Dorsolateral prefrontal cortex (tissue), 120 donors: ENCODE measurements at regions of chr2 and their contacts with region 1.

Region 1: GRCh38 chr2:9003616-9004337 is at the start of gene MBOAT2:
- DNase-seq: peak; percentile 77 to 94 (median 84)
- H3K4me3 ChIP-seq: peak within 1 kb of the TSS; percentile 66 to 98 (median 89)
- H3K27ac ChIP-seq: peak within 1 kb of the TSS; percentile 71 to 99 (median 96)
- H3K27me3 ChIP-seq: no peaks in the 10 kb centered on the region
- CTCF ChIP-seq: peak in 3 of 56 donors; percentile 9 to 16 (median 10)
- total RNA-seq, gene MBOAT2: 52.5 to 138 (median 83.9) TPM

Region 2: DNA sequence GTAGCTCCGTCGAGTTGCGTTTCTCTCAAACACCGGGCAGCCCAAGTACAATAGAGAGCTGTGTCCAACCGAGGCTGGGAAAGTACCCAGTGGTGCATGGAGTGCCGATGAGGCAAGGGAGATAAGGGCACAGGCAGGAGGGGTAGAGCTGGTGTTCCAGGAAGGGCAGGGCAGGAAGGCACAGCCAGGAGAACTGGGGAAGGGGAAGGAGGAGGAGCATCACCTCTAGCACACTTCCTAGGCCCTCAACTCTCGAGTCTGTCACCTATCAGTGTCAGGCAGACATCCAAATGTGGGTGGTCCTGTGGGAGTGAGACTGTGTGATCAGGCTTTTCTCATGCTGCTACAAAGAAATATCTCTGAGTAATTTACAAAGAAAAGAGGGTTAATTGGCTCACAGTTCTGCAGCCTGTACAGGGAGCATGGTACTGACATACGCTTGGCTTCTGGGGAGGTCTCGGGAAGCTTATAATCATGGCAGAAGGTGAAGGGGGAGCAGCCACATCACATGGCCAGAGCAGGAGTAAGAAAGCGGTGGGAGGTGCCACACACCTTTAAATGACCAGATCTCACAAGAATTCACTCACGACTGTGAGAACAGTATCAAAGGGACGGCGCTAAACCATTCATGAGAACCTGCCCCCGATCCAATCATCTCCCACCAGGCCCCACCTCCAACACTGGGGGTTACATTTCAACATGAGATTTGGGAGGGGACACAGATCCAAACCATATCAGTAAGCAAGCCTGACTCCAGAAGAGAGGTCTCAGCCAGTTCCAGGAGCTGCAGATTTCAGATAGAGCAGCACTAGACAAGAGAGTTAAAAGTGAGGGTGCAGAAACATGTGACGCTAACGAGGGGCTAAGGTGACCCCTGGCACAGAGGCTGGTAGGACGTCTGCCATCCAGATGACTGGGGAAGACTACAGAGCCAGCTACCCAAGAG is 76.0 kb before region 1 on chr2:
- intact Hi-C with region 1: loop called (anchors 2 to 5 kb)
- DNase-seq: peak in 9 of 10 donors; percentile 26 to 81 (median 65)
- H3K4me3 ChIP-seq: peak overlapping the region in 5 of 59 donors; percentile 1 to 37 (median 21)
- H3K27ac ChIP-seq: peak overlapping the region in 56 of 59 donors; percentile 34 to 98 (median 86)
- H3K27me3 ChIP-seq: no peaks in the 10 kb centered on the region
- CTCF ChIP-seq: no peak